Left colon (tissue), 2 donors: ENCODE measurements at regions of chr3 and their contacts with region 1.

Region 1: GRCh38 chr3:161274719-161275298 is 53.7 kb downstream of the NMD3 start:
- DNase-seq: no peak
- ATAC-seq: peak; percentile 39

Region 2: DNA sequence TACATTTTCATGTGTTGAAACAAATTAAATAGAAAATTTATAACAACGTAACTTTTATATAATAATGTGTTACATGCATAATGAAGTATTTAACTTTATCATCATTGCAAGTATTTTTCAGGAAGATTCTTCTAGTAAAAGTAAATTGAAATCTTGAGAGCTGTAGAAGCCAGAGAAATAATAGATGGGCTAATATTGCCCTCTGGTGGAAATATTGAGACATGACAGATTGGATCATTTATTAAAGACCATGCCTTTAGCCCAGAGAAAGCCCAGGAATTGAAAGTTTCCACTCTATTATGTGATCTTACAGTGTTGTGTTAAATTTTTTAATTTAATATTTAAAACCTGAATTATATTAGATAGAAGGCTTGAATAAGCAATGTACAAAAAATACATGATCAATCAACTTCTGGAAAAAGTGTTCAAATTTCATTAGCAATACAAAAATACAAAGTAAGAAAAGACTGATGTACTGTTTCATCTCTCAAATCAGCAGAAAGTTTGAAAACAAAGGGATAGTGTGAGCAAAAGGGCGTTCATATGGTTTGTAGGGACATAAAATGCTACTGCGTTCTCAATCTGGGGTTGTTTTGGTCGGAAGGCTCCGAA is 149.2 kb after region 1 on chr3:
- intact Hi-C with region 1: loop called (anchors 2 to 10 kb)
- DNase-seq: no peak
- ATAC-seq: peak; percentile 52